ENCODE measurements at regions of chr1 and their contacts with region 1.

Region 1: DNA sequence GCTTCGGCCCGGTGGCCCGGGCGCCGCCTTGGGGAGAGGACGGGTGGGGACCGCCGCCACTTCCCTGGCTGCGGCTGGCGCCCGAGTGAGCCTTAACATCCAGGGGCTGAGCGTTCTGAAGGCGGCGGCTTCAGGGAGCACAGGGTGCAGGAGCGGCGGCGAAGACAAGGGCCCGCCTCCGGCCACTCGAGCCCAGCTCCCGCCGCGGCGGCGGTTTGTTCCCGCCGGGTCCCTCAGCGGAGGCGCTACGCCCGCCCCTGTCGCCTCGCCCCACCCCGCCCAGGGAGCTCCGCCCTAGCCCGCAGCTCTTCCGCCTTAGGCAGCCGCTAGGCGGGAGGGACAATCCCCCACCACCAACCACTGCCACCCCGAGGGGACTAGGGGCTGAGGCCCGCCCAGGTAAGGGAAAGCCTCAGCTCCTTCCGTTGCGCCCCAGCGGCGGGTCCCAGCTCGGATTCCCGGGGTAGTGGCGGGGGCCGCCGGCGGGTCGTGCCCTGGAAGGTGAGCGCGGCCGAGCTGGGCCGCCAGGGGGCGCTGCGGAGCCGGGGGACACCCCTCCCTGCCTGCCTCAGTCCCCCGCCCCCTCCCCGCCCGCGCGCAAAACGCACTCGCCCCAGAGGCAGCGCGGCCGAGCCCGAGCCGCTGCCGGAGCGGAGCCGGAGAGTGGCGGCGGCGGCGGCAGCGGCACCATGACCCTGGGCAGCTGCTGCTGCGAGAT is at the start of gene FOXD2:
- DNase-seq: no peak
- H3K4me3 ChIP-seq: peak within 1 kb of the TSS; percentile 86
- H3K27me3 ChIP-seq: peaks cover 13% of the 10 kb centered on the region
- CTCF ChIP-seq: peak; percentile 61
- polyA plus RNA-seq, gene FOXD2: 0.07 and 0.09 TPM in 2 replicates

Region 2: GRCh38 chr1:47192458-47193384 is 244.9 kb before region 1 on chr1:
- CTCF ChIA-PET with region 1: interaction called, 10 read pairs
- POLR2A ChIA-PET with region 1: no interaction called
- DNase-seq: no peak
- H3K4me3 ChIP-seq: no peak overlapping the region
- H3K27me3 ChIP-seq: peaks cover 4% of the 10 kb centered on the region; the same call in 1 of the 2 replicates
- CTCF ChIP-seq: peak; percentile 97

Region 3: GRCh38 chr1:47449822-47450552 is 12.4 kb after region 1 on chr1:
- CTCF ChIA-PET with region 1: interaction called, 11 read pairs
- POLR2A ChIA-PET with region 1: no interaction called
- DNase-seq: no peak
- H3K4me3 ChIP-seq: no peak overlapping the region
- H3K27me3 ChIP-seq: peaks cover 10% of the 10 kb centered on the region
- CTCF ChIP-seq: peak; percentile 38; the same call in 1 of the 2 replicates

Region 4: GRCh38 chr1:47569681-47570470 is 132.3 kb after region 1 on chr1:
- CTCF ChIA-PET with region 1: interaction called, 14 read pairs
- POLR2A ChIA-PET with region 1: no interaction called
- DNase-seq: peak; percentile 85
- H3K4me3 ChIP-seq: no peak overlapping the region
- H3K27me3 ChIP-seq: no peaks in the 10 kb centered on the region
- CTCF ChIP-seq: peak; percentile 76

Region 5: DNA sequence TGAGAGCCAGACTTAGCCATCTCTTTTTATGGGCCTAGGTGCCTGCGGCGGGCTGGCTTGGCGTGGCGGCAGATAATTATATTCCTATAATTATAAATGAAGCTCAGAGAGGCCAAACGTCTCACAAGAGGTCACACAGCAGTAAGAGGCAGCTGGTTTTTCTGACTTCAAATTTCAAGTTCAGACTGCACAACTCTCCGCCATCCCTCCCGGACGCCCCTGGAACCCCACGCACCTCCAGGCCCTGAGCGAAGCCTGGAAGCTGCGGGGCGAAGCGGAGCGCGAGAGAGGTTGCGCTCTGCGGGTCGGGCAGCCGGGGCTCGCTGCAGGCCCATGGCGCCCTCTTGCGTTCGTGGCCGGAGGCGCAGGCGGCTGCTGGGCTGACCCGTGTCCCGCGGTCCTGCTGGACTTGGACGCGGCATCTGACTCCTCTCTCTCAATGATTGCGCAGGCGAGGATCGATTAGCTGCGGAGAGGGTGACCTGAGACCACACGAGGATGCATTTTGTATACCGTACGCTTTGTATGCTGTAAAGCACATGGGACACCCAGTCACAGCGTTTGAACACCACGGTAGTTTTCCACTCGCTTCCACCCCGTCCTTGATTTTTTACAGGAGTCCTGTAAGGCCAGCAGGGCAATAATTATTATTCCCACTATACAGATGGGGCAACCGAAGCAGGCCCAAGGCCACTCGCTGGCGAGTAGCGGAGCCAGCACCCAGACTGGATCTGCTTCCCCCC is 272.9 kb after region 1 on chr1:
- CTCF ChIA-PET with region 1: interaction called, 167 read pairs
- POLR2A ChIA-PET with region 1: no interaction called
- DNase-seq: no peak
- H3K4me3 ChIP-seq: no peak overlapping the region
- H3K27me3 ChIP-seq: peaks cover 33% of the 10 kb centered on the region
- CTCF ChIP-seq: peak; percentile 96

Region 6: GRCh38 chr1:47725992-47726855 is 288.6 kb after region 1 on chr1:
- CTCF ChIA-PET with region 1: interaction called, 50 read pairs
- POLR2A ChIA-PET with region 1: no interaction called
- DNase-seq: no peak
- H3K4me3 ChIP-seq: no peak overlapping the region
- H3K27me3 ChIP-seq: peaks cover 15% of the 10 kb centered on the region
- CTCF ChIP-seq: peak; percentile 95

Measured in BJ (cell line).